Activated CD4-positive, alpha-beta memory T cell treated with anti-CD3 and anti-CD28 coated beads, Interleukin-2, amount 10 ng/mL, durations not matched to agents 7 days and 5 days (primary cell): ENCODE measurements at regions of chr13 and their contacts with region 1.

Region 1: DNA sequence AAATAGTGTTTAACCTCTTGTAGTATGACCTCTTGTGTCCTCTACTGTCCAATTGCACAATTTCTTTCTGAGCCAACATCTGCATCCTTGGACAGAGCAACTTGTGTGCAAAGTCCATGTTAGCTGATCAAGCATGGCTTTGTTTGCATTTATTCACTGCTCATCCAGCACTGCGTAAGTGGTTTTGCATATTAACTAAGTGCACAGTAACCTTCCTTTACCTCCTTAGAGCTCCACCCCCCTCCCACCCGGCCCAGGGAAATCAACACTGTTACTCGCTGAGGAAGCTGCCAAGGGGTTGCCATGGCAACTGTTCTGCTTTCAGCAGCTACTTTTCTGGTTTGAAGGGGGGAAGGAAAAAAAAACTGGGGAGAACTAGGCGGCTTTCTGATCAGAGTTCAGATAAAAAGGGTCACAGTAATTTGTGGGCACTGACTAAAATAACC is 153.5 kb upstream of the KLF12 start:
- DNase-seq: peak; percentile 78
- H3K4me3 Mint-ChIP-seq: peak overlapping the region; percentile 50
- H3K27ac Mint-ChIP-seq: peak overlapping the region; percentile 67
- H3K4me1 Mint-ChIP-seq: peaks cover 44% of the 10 kb centered on the region
- H3K27me3 Mint-ChIP-seq: peaks cover 3% of the 10 kb centered on the region

Region 2: DNA sequence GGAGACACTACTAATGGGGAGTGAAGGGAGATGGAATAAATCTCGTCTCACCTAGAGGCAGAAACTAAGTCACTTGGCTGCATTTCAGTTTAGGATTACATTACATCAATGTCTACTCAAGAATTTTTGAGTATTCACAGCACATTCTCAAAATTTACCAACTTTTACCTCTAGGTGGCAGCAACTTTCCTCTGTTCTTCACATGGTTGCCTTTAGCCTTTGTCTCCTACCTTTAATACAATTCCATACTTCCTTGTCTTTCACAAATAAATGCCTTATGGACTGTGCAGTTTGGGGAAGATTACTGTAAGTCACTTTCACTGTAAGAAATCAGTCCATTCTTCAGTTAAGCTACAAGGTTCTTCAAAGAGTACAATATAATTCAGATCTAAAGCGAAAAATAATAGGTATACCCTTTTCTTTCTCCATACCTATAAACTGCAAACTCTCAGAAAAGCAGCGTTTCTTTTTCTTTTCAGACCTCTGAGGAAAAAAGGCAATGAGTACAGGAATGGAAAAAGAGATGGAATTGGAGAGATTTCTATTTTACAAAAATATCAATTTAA is 532.9 kb before region 1 on chr13:
- CTCF ChIA-PET with region 1: interaction called, 16 read pairs
- POLR2A ChIA-PET with region 1: interaction called, 3 read pairs
- DNase-seq: no peak
- H3K4me3 Mint-ChIP-seq: no peak overlapping the region
- H3K27ac Mint-ChIP-seq: no peak overlapping the region
- H3K4me1 Mint-ChIP-seq: peaks cover 4% of the 10 kb centered on the region
- H3K27me3 Mint-ChIP-seq: no peaks in the 10 kb centered on the region

Region 3: DNA sequence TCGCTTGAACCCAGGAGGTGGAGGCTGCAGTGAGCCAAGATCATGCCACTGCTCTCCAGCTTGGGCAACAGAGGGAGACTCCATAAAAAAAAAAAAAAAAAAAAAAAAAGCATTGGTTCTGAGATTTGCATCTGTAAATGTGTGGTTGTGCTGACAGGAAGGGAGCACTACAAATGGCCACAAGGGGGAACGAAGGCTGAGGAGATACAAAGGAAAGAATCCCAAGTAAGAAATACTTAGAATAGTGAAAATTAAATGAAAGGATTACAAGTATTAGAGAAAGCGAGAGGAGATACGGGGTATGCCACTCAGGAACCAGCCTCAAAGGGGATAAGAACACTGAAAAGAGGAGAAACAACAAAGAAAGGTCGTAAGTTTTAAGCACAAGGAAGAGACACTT is 438.5 kb before region 1 on chr13:
- CTCF ChIA-PET with region 1: interaction called, 17 read pairs
- POLR2A ChIA-PET with region 1: no interaction called
- DNase-seq: no peak
- H3K4me3 Mint-ChIP-seq: no peak overlapping the region
- H3K27ac Mint-ChIP-seq: no peak overlapping the region
- H3K4me1 Mint-ChIP-seq: peaks cover 7% of the 10 kb centered on the region
- H3K27me3 Mint-ChIP-seq: no peaks in the 10 kb centered on the region

Region 4: DNA sequence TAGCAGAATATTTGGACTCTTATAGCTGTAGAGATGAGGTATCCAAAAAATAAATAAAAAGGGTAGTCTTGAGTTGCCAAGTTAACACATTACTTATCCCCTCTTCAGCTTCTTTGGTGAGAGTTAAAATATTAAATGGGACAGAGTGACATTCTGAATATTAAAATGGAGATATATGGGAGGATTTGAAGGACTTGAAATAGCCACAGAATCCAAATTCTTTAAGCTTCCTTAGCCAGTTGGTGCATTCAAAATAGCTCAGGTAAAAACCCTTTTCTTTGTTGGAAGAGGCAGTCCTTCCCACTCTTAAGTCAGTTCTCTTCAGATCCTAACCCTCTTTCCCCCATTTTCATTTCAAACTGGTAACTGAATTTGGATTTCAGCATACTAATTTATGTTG is 23.4 kb before region 1 on chr13:
- CTCF ChIA-PET with region 1: interaction called, 11 read pairs
- POLR2A ChIA-PET with region 1: interaction called, 3 read pairs
- DNase-seq: no peak
- H3K4me3 Mint-ChIP-seq: no peak overlapping the region
- H3K27ac Mint-ChIP-seq: no peak overlapping the region
- H3K4me1 Mint-ChIP-seq: peaks cover 3% of the 10 kb centered on the region
- H3K27me3 Mint-ChIP-seq: peaks cover 1% of the 10 kb centered on the region

Region 5: DNA sequence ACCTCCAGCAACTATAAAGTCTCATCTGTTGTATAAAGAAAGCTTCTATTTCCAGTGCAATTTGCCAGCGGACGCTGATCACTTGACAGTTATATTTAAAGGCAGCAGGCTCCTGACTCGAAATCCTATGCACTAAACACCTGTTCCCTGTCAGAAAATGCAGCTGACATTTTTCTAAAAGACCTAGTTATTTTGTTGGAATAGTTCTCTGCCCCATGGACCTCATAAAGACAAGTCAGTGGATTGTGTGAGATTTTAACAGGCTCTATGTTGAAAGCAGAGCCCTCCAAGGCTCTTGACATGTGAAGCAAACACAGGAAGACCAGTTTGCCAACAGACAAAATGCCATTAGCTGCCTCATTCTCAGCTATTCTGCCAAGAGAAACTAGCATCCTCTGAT is 151.2 kb after region 1 on chr13:
- CTCF ChIA-PET with region 1: no interaction called
- POLR2A ChIA-PET with region 1: no interaction called
- DNase-seq: no peak
- H3K4me3 Mint-ChIP-seq: no peak overlapping the region
- H3K27ac Mint-ChIP-seq: no peak overlapping the region
- H3K4me1 Mint-ChIP-seq: no peaks in the 10 kb centered on the region
- H3K27me3 Mint-ChIP-seq: peaks cover 2% of the 10 kb centered on the region

Region 6: DNA sequence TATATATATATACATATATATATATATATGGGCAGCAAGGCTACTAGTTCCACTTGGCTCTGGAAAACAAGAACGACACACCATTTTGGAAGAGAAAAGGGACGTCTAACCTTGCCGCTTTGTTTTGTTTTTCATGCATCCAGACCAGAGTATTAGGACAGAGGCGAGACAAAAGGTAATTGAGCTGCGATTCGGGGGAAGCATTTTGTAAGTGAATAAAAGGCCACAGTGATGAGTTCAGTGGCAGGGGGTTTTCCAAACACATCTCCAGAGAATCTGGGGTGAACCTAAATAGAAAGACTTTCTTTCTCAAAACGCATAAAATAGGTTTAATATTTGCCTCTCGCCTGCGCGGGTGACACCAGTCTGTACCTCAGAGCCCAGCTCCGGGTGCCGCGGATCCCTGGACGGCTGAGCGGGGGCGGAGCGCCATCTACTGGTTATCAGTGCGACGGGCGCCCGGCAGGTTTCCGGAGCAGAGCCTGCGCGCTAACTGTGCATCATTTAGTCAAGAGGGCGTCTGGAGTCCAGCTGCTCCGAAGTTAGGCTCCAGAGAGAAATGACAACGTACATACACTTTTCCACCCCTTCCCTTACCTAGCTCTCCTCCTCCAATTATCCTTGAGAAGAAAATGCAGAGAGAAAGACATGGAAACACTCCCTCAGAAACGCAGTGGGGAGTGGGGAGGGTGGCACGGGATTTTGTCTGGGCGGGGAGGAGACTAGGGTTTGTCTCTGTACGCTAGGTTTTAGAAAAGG is 931.9 kb after region 1 on chr13:
- CTCF ChIA-PET with region 1: interaction called, 17 read pairs
- POLR2A ChIA-PET with region 1: no interaction called
- DNase-seq: peak; percentile 82
- H3K4me3 Mint-ChIP-seq: peak overlapping the region; percentile 3
- H3K27ac Mint-ChIP-seq: no peak overlapping the region
- H3K4me1 Mint-ChIP-seq: peaks cover 6% of the 10 kb centered on the region
- H3K27me3 Mint-ChIP-seq: peaks cover 21% of the 10 kb centered on the region